ENCODE measurements at regions of chr20 and their contacts with region 1.

Region 1: DNA sequence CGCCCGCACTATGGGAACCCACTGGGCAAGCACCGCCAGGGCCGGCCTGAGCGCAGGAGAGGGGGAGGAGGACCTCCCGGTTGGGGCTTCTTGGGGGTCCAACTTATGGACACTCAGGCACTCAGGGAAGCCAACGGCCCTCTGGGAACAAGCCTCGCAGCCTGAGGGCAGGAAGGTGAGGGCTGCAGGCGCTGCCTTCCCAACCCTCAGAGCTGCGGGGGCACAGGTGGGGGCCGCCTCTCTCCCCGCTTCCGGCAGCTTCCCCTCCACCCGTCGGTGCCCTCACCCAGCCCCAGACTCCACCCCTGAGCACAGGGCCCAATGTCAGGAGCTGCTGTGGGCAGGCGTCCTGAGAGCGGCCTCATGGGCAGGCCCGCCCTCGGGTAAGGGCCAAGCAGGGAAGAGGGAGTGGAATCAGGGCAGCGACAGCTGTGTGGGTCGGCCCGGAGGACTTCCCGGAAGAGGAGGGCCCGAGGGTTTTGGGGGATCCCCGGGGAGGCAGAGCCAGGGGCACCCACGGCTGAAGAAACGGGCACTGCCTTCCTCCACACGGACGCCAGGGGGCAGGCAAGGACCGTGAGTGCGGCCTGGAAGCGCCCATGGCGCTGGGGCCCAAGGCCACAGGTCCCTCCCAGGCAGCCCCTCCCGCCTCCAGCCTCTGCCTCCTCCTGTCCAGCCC is 488 bp upstream of the PTK6 start:
- DNase-seq: peak; percentile 96 to 98 (median 98)
- ATAC-seq: peak; percentile 74
- H3K4me3 ChIP-seq: no peak overlapping the region
- H3K4me1 ChIP-seq: peaks cover 38% of the 10 kb centered on the region
- CTCF ChIP-seq: peak; percentile 95

Region 2: GRCh38 chr20:63973636-63974402 is 436.2 kb after region 1 on chr20:
- intact Hi-C with region 1: loop called (anchors 5 kb)
- DNase-seq: peak; percentile 87 to 91 (median 88)
- ATAC-seq: peak; percentile 89
- H3K4me3 ChIP-seq: no peak overlapping the region
- H3K4me1 ChIP-seq: peaks cover 14% of the 10 kb centered on the region
- CTCF ChIP-seq: peak; percentile 98

Measured in mucosa of descending colon (tissue), 3 donors.